Activated B cell treated with CpG ODN at 0.5 μM for 24 hours (primary cell): ENCODE measurements at regions of chr6 and their contacts with region 1.

Region 1: DNA sequence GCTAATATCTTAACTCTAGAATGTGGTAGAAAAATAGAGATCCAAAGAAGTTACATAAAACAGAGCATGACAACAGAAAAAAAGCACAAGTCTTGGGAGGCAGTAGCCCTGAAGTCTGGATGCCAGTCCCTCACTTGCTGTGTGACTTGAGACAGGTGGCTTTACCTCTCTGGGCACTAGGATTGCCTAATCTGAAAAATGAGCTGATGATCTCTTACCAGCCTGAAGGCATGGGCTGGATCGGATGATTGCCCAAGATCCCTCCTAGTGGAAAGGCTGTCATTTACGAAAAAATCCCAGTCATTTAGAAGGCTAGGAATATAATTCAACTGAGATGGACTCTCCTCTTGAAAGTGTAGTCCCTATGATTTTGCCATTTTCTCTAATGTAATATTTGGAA is 10.9 kb upstream of the GCM1 start:
- DNase-seq: no peak
- ATAC-seq: no peak
- H3K4me3 Mint-ChIP-seq: no peak overlapping the region
- H3K27ac Mint-ChIP-seq: no peak overlapping the region
- H3K4me1 Mint-ChIP-seq: peaks cover 7% of the 10 kb centered on the region
- H3K27me3 Mint-ChIP-seq: no peaks in the 10 kb centered on the region
- CTCF ChIP-seq: no peak

Region 2: GRCh38 chr6:52953911-52954839 is 205.4 kb before region 1 on chr6:
- CTCF ChIA-PET with region 1: no interaction called
- POLR2A ChIA-PET with region 1: no interaction called
- intact Hi-C with region 1: no loop called
- DNase-seq: no peak
- ATAC-seq: no peak
- H3K4me3 Mint-ChIP-seq: no peak overlapping the region
- H3K27ac Mint-ChIP-seq: no peak overlapping the region
- H3K4me1 Mint-ChIP-seq: no peaks in the 10 kb centered on the region
- H3K27me3 Mint-ChIP-seq: peaks cover 4% of the 10 kb centered on the region
- CTCF ChIP-seq: no peak

Region 3: DNA sequence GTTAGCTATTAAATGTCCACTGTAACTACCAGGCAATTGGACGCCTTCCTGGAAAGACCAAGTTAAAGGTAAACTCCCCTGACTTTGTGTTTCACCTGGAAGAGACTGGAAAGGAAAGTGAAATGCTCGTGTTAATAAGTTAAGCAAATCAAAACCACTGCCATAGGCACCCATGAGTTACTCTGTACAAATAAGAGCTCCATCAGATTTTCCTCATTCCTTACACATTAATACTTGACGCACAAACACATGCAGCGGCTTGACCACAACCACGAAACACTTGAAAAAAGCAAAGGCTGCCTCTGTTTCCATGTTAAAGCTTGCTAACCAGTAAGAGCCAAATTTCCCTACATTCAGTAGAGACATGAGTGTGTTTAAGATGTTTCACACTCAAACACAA is 30.7 kb before region 1 on chr6:
- CTCF ChIA-PET with region 1: interaction called, 3 read pairs
- POLR2A ChIA-PET with region 1: interaction called, 11 read pairs
- intact Hi-C with region 1: no loop called
- DNase-seq: no peak
- ATAC-seq: no peak
- H3K4me3 Mint-ChIP-seq: no peak overlapping the region
- H3K27ac Mint-ChIP-seq: no peak overlapping the region
- H3K4me1 Mint-ChIP-seq: no peaks in the 10 kb centered on the region
- H3K27me3 Mint-ChIP-seq: peaks cover 5% of the 10 kb centered on the region
- CTCF ChIP-seq: no peak

Region 4: GRCh38 chr6:53342217-53342616 is 182.7 kb after region 1 on chr6:
- CTCF ChIA-PET with region 1: no interaction called
- POLR2A ChIA-PET with region 1: no interaction called
- intact Hi-C with region 1: no loop called
- DNase-seq: no peak
- ATAC-seq: peak; percentile 42
- H3K4me3 Mint-ChIP-seq: peak overlapping the region; percentile 62
- H3K27ac Mint-ChIP-seq: peak overlapping the region; percentile 85
- H3K4me1 Mint-ChIP-seq: peaks cover 97% of the 10 kb centered on the region
- H3K27me3 Mint-ChIP-seq: no peaks in the 10 kb centered on the region
- CTCF ChIP-seq: no peak